Aorta (tissue), 5 donors: ENCODE measurements at regions of chr20 and their contacts with region 1.

Region 1: DNA sequence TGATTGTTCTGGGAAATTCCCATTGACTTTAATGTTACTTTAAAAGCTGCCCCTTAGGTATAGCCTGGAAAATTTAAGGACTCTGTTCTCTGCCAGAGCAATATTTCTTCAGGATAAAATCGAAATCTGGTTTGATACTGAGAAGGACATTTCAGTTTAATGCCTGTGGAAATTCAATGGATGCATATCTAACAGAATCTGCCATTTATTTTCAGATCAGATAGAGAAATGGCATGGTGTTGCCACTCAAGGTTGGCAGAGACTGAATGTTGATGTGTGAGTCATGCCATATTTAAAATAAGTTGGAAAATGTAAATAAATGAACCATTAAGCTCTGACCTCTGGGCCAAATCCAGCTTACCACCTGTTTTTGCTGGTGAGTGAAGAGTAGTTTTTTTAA is 594.6 kb downstream of the DOK5 start:
- DNase-seq: no peak
- ATAC-seq: no peak
- H3K4me3 ChIP-seq: no peak overlapping the region
- H3K27ac ChIP-seq: no peak overlapping the region
- H3K4me1 ChIP-seq: no peaks in the 10 kb centered on the region
- H3K27me3 ChIP-seq: no peaks in the 10 kb centered on the region

Region 2: GRCh38 chr20:54950285-54950684 is 119.7 kb before region 1 on chr20:
- intact Hi-C with region 1: no loop called
- DNase-seq: no peak
- ATAC-seq: no peak
- H3K4me3 ChIP-seq: no peak overlapping the region
- H3K27ac ChIP-seq: no peak overlapping the region
- H3K4me1 ChIP-seq: no peaks in the 10 kb centered on the region
- H3K27me3 ChIP-seq: no peaks in the 10 kb centered on the region

Region 3: DNA sequence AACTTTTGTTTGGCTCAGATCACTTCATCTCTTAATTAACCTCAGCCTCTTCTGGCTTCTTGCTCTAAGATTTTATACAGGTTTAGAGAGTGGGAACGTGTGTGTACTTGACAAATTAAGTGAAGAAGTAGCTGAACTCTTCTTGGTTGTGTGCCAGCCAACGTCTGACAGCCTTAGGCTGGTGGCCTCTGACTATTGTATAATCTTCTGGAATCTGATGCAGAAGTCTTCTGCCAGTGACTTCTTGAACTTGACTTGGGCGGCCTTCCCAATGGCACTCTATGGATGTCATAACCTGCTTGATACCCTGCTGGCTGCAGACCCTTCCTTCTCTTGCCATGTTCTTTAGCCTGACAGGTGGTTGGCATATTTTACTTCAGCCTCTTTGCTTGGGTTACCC is 66.0 kb after region 1 on chr20:
- intact Hi-C with region 1: loop called in 1 of 2 experiments (anchors 10 kb)
- DNase-seq: no peak
- ATAC-seq: no peak
- H3K4me3 ChIP-seq: no peak overlapping the region
- H3K27ac ChIP-seq: no peak overlapping the region
- H3K4me1 ChIP-seq: no peaks in the 10 kb centered on the region
- H3K27me3 ChIP-seq: peaks cover 0 to 2% of the 10 kb centered on the region in 2 donors